ENCODE measurements at regions of chr17 and their contacts with region 1.

Region 1: DNA sequence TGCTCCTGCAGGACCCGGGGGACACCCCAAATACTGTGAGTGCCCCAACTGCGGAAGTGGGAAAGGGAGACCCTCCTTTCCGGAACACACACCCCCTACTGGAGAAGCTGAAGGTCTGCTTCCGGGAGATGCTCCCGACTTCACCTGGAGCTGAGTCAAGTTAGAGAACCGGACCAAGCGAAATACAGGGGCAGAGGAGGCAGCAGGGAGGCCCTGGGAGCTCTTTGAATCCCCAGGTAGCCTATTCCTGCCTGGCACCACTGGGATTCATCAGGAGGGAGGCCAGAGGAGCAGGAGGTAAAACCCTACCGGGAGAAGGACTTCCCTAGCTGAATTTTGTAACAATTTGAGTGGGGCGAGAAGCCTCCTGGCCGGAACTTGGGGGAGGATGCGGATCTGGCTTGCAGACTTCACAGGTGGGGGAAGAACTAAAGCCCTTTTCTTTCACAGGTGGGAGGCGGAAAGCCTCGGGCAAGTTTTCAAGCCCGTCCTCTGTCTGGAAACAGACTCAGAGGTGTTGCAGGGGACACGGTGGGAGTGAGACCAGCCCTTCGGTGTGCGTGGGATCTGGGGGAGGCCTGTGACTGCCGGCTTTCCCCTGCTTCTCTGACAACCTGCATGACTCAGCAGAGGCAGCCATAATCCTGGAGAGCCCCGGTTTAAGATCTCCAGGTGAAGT is 22.4 kb upstream of the TEKT1 start:
- DNase-seq: peak; percentile 46 to 73
- ATAC-seq: peak; percentile 92 to 93; a peak in 5 of 6 replicates
- H3K4me3 ChIP-seq: peak overlapping the region; percentile 46
- H3K27ac ChIP-seq: peak overlapping the region; percentile 83 to 88
- H3K4me1 ChIP-seq: no peaks in the 10 kb centered on the region; the same call in 1 of the 3 replicates
- CTCF ChIP-seq: peak; percentile 40; the same call in 2 of the 3 replicates
- EP300 ChIP-seq: no peak
- POLR2A ChIP-seq: no peak; the same call in 1 of the 2 replicates
- RAD21 ChIP-seq: 0 out of 5 replicates have a peak, but pooled peaks of 1 of the 2 experiments have one; percentile 4

Region 2: GRCh38 chr17:6823011-6823442 is 30.9 kb before region 1 on chr17:
- CTCF ChIA-PET with region 1: no interaction called
- POLR2A ChIA-PET with region 1: no interaction called
- DNase-seq: peak in 1 of 2 experiments; percentile 48
- ATAC-seq: peak in 1 of 2 experiments; percentile 60; a peak in 3 of 6 replicates
- H3K4me3 ChIP-seq: no peak overlapping the region
- H3K27ac ChIP-seq: no peak overlapping the region
- H3K4me1 ChIP-seq: peaks cover 8% of the 10 kb centered on the region; the same call in 2 of the 3 replicates
- CTCF ChIP-seq: no peak
- EP300 ChIP-seq: no peak
- POLR2A ChIP-seq: no peak
- RAD21 ChIP-seq: no peak

Region 3: DNA sequence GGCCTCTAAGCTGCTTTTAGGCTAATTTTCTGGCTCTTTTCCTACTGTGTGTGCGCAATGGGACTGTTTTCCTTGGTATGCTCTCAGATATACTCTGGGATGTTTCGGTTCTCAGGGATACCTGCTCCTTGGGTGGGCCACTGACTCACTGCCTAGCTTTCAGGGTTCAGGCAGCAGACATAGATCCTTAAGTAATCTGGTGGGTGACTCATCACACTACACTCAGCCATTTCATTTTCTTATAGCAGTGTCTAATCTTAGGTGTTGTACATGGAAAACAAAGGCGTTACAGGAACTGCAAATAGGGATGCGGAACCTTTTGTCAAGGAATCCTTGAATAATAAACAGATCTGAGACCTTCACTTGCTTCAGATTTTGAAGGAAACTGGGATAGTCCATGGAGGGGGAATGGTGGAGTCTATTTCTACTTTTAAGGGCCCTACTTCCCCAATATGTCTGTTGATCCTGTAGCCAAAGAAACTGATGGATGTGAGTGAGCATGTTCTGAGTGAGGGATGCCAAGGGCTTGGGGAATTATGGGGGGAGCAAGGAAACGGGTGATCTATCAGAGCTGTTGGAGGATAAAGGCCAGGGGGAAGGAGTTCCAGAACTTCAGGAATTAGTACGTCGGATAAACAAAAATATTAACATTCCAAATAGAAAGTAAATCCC is 18.4 kb after region 1 on chr17:
- CTCF ChIA-PET with region 1: interaction called, 22 read pairs
- POLR2A ChIA-PET with region 1: interaction called, 3 read pairs
- DNase-seq: peak; percentile 90 to 98
- ATAC-seq: peak; percentile 98 to 100
- H3K4me3 ChIP-seq: no peak overlapping the region
- H3K27ac ChIP-seq: peak overlapping the region; percentile 85
- H3K4me1 ChIP-seq: peaks cover 58% of the 10 kb centered on the region
- CTCF ChIP-seq: no peak
- EP300 ChIP-seq: peak; percentile 90; a peak in 3 of 5 replicates
- POLR2A ChIP-seq: no peak
- RAD21 ChIP-seq: peak; percentile 27 to 41; a peak in 2 of 5 replicates

Region 4: GRCh38 chr17:6894206-6894528 is 40.3 kb after region 1 on chr17:
- CTCF ChIA-PET with region 1: interaction called, 13 read pairs
- POLR2A ChIA-PET with region 1: no interaction called
- DNase-seq: no peak
- ATAC-seq: no peak
- H3K4me3 ChIP-seq: no peak overlapping the region
- H3K27ac ChIP-seq: no peak overlapping the region
- H3K4me1 ChIP-seq: no peaks in the 10 kb centered on the region
- CTCF ChIP-seq: no peak
- EP300 ChIP-seq: no peak
- POLR2A ChIP-seq: no peak
- RAD21 ChIP-seq: peak in 1 of 2 experiments; percentile 34; a peak in 2 of 5 replicates

Region 5: GRCh38 chr17:7095625-7096024 is 241.7 kb after region 1 on chr17:
- CTCF ChIA-PET with region 1: no interaction called
- POLR2A ChIA-PET with region 1: no interaction called
- DNase-seq: no peak
- ATAC-seq: no peak
- H3K4me3 ChIP-seq: no peak overlapping the region
- H3K27ac ChIP-seq: no peak overlapping the region
- H3K4me1 ChIP-seq: peaks cover 6% of the 10 kb centered on the region
- CTCF ChIP-seq: no peak
- EP300 ChIP-seq: no peak
- POLR2A ChIP-seq: no peak
- RAD21 ChIP-seq: no peak

Measured in A549 (cell line).